Activated B cell treated with CpG ODN at 0.5 μM for 24 hours (primary cell): ENCODE measurements at regions of chr1 and their contacts with region 1.

Region 1: GRCh38 chr1:204363335-204364124 is 3.8 kb upstream of the PLEKHA6 start:
- DNase-seq: peak; percentile 54
- ATAC-seq: peak; percentile 91
- H3K4me3 Mint-ChIP-seq: peak overlapping the region; percentile 77
- H3K27ac Mint-ChIP-seq: no peak overlapping the region
- H3K4me1 Mint-ChIP-seq: peaks cover 3% of the 10 kb centered on the region
- H3K27me3 Mint-ChIP-seq: peaks cover 45% of the 10 kb centered on the region
- CTCF ChIP-seq: peak; percentile 19

Region 2: GRCh38 chr1:203504397-203505250 is 858.9 kb before region 1 on chr1:
- CTCF ChIA-PET with region 1: no interaction called
- POLR2A ChIA-PET with region 1: no interaction called
- intact Hi-C with region 1: loop called (anchors 5 kb)
- DNase-seq: peak; percentile 45
- ATAC-seq: peak; percentile 57
- H3K4me3 Mint-ChIP-seq: no peak overlapping the region
- H3K27ac Mint-ChIP-seq: peak overlapping the region; percentile 10
- H3K4me1 Mint-ChIP-seq: peaks cover 2% of the 10 kb centered on the region
- H3K27me3 Mint-ChIP-seq: peaks cover 12% of the 10 kb centered on the region
- CTCF ChIP-seq: peak; percentile 83

Region 3: DNA sequence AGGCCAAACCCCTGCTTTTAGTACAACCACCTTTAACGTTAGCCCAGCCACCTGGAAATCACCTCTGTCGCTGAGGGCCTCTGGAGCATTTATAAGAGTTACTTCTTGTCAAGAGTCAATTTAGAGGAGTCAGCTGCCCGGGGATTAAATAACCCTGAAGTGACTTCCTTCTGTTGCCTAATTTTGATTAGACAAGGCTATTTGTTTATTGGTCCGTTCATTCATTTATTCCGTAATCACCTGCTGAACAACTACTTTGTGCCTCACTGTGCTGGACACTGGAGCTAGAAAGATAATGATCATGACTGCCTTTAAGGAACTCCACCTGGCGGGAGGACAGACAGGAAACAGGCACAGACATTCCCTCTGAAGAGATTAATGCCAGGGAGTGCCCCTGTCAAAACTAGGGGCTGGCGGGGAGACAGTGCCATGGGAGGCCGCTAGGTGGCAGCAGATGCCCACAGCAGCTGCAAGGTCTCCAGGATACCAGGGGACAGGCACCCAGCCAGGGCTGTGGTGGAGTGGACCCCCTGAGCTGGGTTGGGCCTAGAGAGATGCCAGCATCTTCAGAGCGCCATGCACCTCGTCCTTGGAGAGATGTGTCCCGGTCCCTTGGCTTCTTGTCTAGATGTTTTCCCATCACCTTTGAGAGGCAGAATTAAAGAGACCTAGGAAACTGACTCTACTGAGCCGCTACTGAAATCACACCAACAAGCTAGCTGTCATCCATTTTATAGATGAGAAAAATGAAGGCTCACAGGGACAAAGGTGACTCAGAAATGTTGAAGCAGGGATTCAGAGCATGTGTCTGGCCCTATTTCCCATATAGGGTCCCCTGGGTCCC is 201.1 kb before region 1 on chr1:
- CTCF ChIA-PET with region 1: interaction called, 36 read pairs
- POLR2A ChIA-PET with region 1: no interaction called
- intact Hi-C with region 1: loop called (anchors 1 kb)
- DNase-seq: peak; percentile 71
- ATAC-seq: peak; percentile 98
- H3K4me3 Mint-ChIP-seq: no peak overlapping the region
- H3K27ac Mint-ChIP-seq: no peak overlapping the region
- H3K4me1 Mint-ChIP-seq: no peaks in the 10 kb centered on the region
- H3K27me3 Mint-ChIP-seq: peaks cover 20% of the 10 kb centered on the region
- CTCF ChIP-seq: peak; percentile 60

Region 4: GRCh38 chr1:204257954-204258752 is 105.4 kb before region 1 on chr1:
- CTCF ChIA-PET with region 1: interaction called, 8 read pairs
- POLR2A ChIA-PET with region 1: no interaction called
- intact Hi-C with region 1: loop called (anchors 1 kb)
- DNase-seq: no peak
- ATAC-seq: no peak
- H3K4me3 Mint-ChIP-seq: no peak overlapping the region
- H3K27ac Mint-ChIP-seq: no peak overlapping the region
- H3K4me1 Mint-ChIP-seq: no peaks in the 10 kb centered on the region
- H3K27me3 Mint-ChIP-seq: no peaks in the 10 kb centered on the region
- CTCF ChIP-seq: no peak

Region 5: GRCh38 chr1:204398217-204399081 is 34.9 kb after region 1 on chr1:
- CTCF ChIA-PET with region 1: interaction called, 10 read pairs
- POLR2A ChIA-PET with region 1: interaction called, 4 read pairs
- intact Hi-C with region 1: loop called (anchors 5 kb)
- DNase-seq: no peak
- ATAC-seq: peak; percentile 97
- H3K4me3 Mint-ChIP-seq: no peak overlapping the region
- H3K27ac Mint-ChIP-seq: peak overlapping the region; percentile 77
- H3K4me1 Mint-ChIP-seq: peaks cover 3% of the 10 kb centered on the region
- H3K27me3 Mint-ChIP-seq: no peaks in the 10 kb centered on the region
- CTCF ChIP-seq: peak; percentile 40